ENCODE measurements at regions of chr6 and their contacts with region 1.

Region 1: DNA sequence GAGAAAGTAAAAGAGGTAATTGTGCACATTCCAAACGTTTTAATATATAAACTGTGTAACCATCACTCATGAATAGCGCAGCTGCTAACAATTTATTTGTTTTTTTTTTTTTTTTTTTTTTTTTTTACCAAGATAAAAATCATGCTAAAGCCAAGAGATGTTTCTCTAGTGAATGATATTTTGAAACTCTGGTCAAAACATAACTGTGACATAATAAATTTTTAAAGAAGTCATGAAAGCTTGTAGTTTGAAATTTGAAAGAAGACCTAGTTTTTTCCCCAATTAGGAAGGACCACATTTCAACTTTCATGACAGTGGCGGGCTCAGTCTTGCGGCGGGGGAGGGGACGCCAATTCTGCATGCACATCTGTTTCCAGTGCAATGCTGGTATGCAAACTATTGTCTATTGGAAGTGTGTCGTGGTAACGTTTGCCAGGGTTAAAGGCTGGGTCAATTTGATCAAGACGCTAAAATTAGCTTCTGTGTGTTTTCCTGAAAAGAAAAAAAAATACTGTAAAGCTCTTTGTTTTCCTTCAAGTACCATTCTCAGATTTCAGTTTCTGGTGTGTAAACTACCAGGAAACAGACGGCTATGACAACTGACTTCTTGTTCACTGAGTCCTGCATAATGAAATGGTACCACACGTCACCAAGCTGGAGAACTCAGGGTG is 211.9 kb downstream of the FOXC1 start:
- DNase-seq: no peak
- H3K27ac ChIP-seq: no peak overlapping the region
- CTCF ChIP-seq: no peak

Region 2: GRCh38 chr6:1716845-1717244 is 104.8 kb before region 1 on chr6:
- CTCF ChIA-PET with region 1: no interaction called
- POLR2A ChIA-PET with region 1: interaction called, 10 read pairs
- DNase-seq: no peak
- H3K27ac ChIP-seq: no peak overlapping the region
- CTCF ChIP-seq: no peak

Region 3: GRCh38 chr6:2157441-2158127 is 335.9 kb after region 1 on chr6:
- CTCF ChIA-PET with region 1: no interaction called
- POLR2A ChIA-PET with region 1: no interaction called
- DNase-seq: peak; percentile 7
- H3K27ac ChIP-seq: no peak overlapping the region
- CTCF ChIP-seq: no peak